MCF 10A (cell line): ENCODE measurements at regions of chr2 and their contacts with region 1.

Region 1: DNA sequence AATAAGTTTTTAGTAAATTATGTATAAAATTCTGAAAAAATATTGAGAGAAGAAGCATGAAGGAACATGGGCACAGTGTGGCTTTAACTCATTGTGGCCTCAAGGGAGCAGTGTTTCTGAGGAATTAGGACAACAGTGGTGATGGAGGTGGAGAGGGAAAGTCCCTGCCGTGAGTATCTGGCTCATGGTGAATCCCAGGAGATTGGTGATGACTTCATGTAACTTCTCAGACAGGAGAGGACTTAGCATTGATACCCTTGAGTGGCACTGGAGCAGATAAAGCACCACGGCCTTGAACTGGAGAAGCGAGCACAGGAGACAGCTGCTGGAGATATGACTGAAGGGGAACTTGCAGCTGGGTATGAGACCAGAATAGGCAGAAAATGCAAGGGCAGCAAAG is 35.0 kb upstream of the LRP1B start:
- DNase-seq: peak; percentile 56
- H3K4me3 Mint-ChIP-seq: no peak overlapping the region
- H3K27ac Mint-ChIP-seq: no peak overlapping the region
- H3K4me1 Mint-ChIP-seq: peaks cover 5% of the 10 kb centered on the region
- H3K27me3 Mint-ChIP-seq: peaks cover 55% of the 10 kb centered on the region
- CTCF ChIP-seq: peak; percentile 30

Region 2: GRCh38 chr2:141994066-141994465 is 171.7 kb before region 1 on chr2:
- CTCF ChIA-PET with region 1: no interaction called
- POLR2A ChIA-PET with region 1: no interaction called
- intact Hi-C with region 1: no loop called
- DNase-seq: peak; percentile 1
- H3K4me3 Mint-ChIP-seq: no peak overlapping the region
- H3K27ac Mint-ChIP-seq: no peak overlapping the region
- H3K4me1 Mint-ChIP-seq: no peaks in the 10 kb centered on the region
- H3K27me3 Mint-ChIP-seq: peaks cover 32% of the 10 kb centered on the region
- CTCF ChIP-seq: no peak

Region 3: GRCh38 chr2:142582317-142582716 is 416.5 kb after region 1 on chr2:
- CTCF ChIA-PET with region 1: no interaction called
- POLR2A ChIA-PET with region 1: no interaction called
- intact Hi-C with region 1: loop called (anchors 1 kb)
- DNase-seq: peak; percentile 11
- H3K4me3 Mint-ChIP-seq: no peak overlapping the region
- H3K27ac Mint-ChIP-seq: no peak overlapping the region
- H3K4me1 Mint-ChIP-seq: no peaks in the 10 kb centered on the region
- H3K27me3 Mint-ChIP-seq: peaks cover 100% of the 10 kb centered on the region
- CTCF ChIP-seq: peak; percentile 7